Left cardiac atrium (tissue), 4 donors: ENCODE measurements at regions of chr18 and their contacts with region 1.

Region 1: DNA sequence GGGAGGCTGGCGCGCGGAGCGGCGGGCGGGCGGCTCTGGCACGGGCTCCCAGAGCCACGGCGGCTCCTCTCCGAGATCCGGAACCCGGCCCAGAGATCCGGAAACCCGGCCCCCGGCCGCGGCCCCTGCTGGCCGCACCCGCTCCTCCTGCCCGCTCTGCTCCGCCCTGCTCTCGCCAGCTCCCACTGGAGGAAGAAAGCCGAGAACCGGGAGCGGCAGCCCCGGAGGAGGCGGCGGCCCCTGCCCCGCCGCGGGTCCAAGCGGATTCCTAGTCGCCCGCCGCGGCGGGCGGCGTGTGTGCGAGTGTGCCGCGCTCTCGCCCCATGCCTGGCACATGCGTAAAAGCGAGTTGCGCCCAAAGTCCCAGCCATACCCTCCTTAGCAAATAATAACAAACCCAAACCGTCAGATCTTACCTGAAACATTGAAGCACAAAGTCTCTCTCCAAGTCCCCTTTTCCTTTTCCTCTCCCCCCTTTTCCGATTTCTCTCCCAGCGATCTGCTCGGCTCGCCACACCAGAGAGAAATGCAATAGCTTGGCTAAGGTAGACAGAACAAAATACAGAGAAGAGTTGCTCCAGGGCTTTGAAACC is 108.7 kb upstream of the KCTD1 start:
- DNase-seq: peak; percentile 88
- ATAC-seq: peak; percentile 91 to 95

Region 2: DNA sequence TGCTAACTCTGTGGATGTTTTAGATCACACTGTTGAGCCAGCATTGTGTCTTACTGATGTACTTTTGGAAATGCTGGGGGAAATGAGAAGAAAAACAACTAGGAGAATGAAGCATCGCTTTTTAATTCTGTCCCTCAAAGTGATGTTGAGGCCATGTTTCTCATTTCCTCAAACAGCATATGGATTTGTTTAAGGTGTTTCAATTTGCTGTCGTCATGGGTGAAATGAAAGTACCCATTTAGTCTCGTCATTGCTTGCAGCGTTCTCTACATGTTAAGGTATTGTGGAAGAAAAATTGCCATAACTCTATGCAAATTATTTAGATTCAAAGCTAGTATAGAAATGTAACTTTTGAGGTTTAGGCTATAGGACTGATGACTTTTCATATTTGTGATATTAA is 260.0 kb before region 1 on chr18:
- intact Hi-C with region 1: loop called in 1 of 2 experiments (anchors 10 kb)
- DNase-seq: no peak
- ATAC-seq: no peak

Region 3: GRCh38 chr18:26405190-26405801 is 251.7 kb before region 1 on chr18:
- intact Hi-C with region 1: loop called in 1 of 2 experiments (anchors 5 kb)
- DNase-seq: peak; percentile 41
- ATAC-seq: peak; percentile 87 to 90

Region 4: GRCh38 chr18:26548429-26549262 is 108.4 kb before region 1 on chr18 and contains the start of gene KCTD1:
- intact Hi-C with region 1: loop called in 1 of 2 experiments (anchors 10 kb)
- DNase-seq: peak; percentile 89
- ATAC-seq: peak; percentile 58 to 69
- total RNA-seq, gene KCTD1: 35.6 to 42.2 TPM

Region 5: DNA sequence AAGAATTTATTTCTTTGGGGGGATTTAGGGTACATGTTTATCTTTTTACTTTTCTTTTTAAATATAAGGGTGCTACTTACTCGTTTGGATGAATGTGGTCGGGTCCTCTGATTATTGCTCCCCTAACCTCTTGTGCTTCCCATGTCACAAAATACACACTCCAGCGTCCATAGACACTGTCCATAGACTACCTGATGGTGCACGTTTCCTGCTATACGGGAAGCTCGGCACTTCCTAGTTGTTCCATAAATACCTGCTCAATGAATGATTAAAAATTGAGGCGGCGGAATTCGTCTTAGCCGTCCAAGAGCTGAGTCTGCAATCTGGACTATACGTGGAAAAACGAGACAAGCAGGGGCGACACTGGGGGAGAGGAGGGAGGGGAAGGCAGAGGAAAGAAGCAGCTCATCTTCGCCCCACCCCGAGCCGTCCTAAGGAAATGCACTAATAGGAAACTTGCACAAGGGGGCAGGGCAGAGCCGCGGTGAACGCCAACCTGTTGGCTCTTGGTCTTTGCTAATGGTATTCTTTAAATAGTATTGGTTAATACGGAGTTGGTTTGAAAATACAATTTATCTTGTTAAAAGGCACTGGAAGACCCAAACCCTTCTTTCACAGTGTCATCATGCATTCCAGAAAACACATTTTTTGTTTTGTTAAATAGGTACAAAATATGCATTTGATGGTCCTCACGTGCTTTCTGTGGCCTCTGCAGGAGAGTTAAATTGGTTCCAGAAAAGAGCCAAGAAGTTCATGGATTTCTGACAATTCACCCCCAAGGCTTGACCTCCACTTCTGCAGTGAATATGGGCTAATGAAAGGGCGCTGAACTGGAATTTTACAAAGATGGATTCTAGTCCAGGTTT is 35.6 kb before region 1 on chr18:
- intact Hi-C with region 1: no loop called
- DNase-seq: peak; percentile 56
- ATAC-seq: peak; percentile 77 to 83